Mammary epithelial cell (primary cell): ENCODE measurements at regions of chr2 and their contacts with region 1.

Region 1: DNA sequence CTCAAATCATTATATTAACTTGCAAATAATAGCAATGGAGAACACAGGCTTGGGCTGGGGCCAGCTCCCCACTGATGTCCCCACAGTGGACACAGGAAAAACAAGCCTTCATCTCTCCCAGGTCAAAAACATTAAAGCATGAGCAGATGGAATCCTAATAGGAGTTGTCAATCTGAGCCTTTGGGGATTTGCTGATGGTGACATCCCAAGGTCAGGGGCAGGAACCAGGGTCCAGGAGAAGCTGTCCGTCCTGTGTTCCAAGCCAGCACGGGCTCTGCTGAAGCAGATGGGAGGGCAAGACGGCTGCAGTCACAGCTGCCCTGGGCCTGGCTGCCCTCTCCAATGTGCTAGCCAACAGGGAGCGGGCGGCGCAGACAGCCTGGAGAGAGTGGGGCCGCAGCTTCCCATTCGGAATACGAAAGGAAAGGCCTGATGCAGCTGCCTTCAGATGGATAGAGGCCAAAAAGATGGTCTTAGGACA is 135.5 kb downstream of the NDUFA10 start:
- DNase-seq: no peak
- H3K4me3 ChIP-seq: no peak overlapping the region
- H3K27ac ChIP-seq: no peak overlapping the region
- H3K4me1 ChIP-seq: no peaks in the 10 kb centered on the region
- H3K27me3 ChIP-seq: no peaks in the 10 kb centered on the region
- CTCF ChIP-seq: no peak

Region 2: GRCh38 chr2:239836021-239836765 is 53.5 kb before region 1 on chr2:
- CTCF ChIA-PET with region 1: no interaction called
- dilution Hi-C with region 1: loop called (anchors 5 kb)
- in situ Hi-C with region 1: no loop called
- intact Hi-C with region 1: no loop called
- DNase-seq: no peak
- H3K4me3 ChIP-seq: no peak overlapping the region
- H3K27ac ChIP-seq: no peak overlapping the region
- H3K4me1 ChIP-seq: no peaks in the 10 kb centered on the region
- H3K27me3 ChIP-seq: no peaks in the 10 kb centered on the region
- CTCF ChIP-seq: no peak

Region 3: GRCh38 chr2:239953418-239954061 is 63.9 kb after region 1 on chr2:
- CTCF ChIA-PET with region 1: no interaction called
- dilution Hi-C with region 1: no loop called
- in situ Hi-C with region 1: no loop called
- intact Hi-C with region 1: no loop called
- DNase-seq: no peak
- H3K4me3 ChIP-seq: no peak overlapping the region
- H3K27ac ChIP-seq: no peak overlapping the region
- H3K4me1 ChIP-seq: no peaks in the 10 kb centered on the region
- H3K27me3 ChIP-seq: no peaks in the 10 kb centered on the region
- CTCF ChIP-seq: no peak